Activated CD8-positive, alpha-beta memory T cell treated with anti-CD3 and anti-CD28 coated beads, Interleukin-2, amount 10 ng/mL, durations not matched to agents 7 days and 5 days (primary cell): ENCODE measurements at regions of chr17 and their contacts with region 1.

Region 1: DNA sequence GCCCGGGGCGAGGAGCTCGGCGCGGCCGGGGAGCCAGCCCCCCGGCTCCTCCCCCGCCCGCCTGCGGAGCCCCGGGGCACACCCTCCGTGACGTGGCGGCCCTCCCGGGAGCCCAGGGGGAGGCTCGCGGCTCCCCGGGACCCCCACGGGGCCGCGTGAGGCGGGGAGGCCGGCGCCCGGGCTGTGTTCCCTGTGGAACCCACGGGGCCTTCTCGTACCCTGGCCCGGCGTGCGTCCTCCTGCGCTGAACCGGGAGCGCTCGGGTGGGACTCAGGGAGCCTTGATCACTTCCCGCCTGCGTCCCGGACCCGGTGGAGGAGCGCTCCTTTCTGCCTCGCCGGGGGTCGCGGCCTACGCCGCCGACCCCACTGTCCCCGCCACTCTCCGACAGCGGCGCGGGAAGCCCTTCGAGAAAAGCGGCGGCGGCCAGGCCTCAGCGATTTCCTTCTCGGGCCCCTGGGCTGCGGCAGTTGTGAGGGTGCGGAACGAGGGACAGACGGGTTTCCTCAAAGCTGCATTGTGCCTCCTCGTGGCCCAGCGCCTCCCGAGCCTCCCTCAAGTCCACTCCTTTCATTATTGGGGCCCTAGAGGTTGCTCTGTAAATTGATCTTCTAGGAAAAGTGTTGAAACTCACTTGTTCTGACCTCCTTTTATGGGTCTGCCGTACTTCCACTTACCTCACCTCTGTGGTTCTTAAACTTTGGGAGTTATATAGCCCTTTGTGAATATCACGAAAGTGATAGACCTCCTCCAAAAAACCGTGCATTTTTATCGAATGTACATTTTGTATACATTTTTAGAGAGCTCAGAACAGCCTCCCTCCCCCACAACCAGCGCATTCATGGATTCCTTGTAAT is 597 bp downstream of the LIG3 start:
- DNase-seq: peak; percentile 88
- ATAC-seq: peak; percentile 92
- H3K4me3 Mint-ChIP-seq: peak overlapping the region; percentile 94
- H3K27ac Mint-ChIP-seq: peak overlapping the region; percentile 93
- H3K4me1 Mint-ChIP-seq: peaks cover 49% of the 10 kb centered on the region
- H3K27me3 Mint-ChIP-seq: no peaks in the 10 kb centered on the region

Region 2: GRCh38 chr17:34990921-34991365 is 10.0 kb after region 1 on chr17:
- CTCF ChIA-PET with region 1: interaction called, 29 read pairs
- DNase-seq: peak; percentile 56
- ATAC-seq: peak; percentile 74
- H3K4me3 Mint-ChIP-seq: peak overlapping the region; percentile 23
- H3K27ac Mint-ChIP-seq: peak overlapping the region; percentile 97
- H3K4me1 Mint-ChIP-seq: peaks cover 63% of the 10 kb centered on the region
- H3K27me3 Mint-ChIP-seq: no peaks in the 10 kb centered on the region

Region 3: GRCh38 chr17:34998205-34998604 is 17.3 kb after region 1 on chr17:
- CTCF ChIA-PET with region 1: interaction called, 29 read pairs
- DNase-seq: peak; percentile 87
- ATAC-seq: peak; percentile 98
- H3K4me3 Mint-ChIP-seq: no peak overlapping the region
- H3K27ac Mint-ChIP-seq: peak overlapping the region; percentile 52
- H3K4me1 Mint-ChIP-seq: peaks cover 13% of the 10 kb centered on the region
- H3K27me3 Mint-ChIP-seq: no peaks in the 10 kb centered on the region